H1 (cell line): ENCODE measurements at regions of chr11 and their contacts with region 1.

Region 1: GRCh38 chr11:100816823-100817222 is 129.7 kb downstream of the ARHGAP42 start:
- DNase-seq: no peak
- H3K4me3 ChIP-seq: no peak overlapping the region
- H3K27ac ChIP-seq: no peak overlapping the region
- H3K4me1 ChIP-seq: peaks cover 0 to 9% (median 2%) of the 10 kb centered on the region in 4 experiments; a peak in 4 of 7 replicates
- H3K27me3 ChIP-seq: peaks cover 0 to 1% (median 0%) of the 10 kb centered on the region in 4 experiments; a peak in 1 of 7 replicates
- CTCF ChIP-seq: no peak
- EP300 ChIP-seq: no peak
- POLR2A ChIP-seq: no peak
- RAD21 ChIP-seq: no peak

Region 2: GRCh38 chr11:100774132-100774531 is 42.7 kb before region 1 on chr11:
- CTCF ChIA-PET with region 1: interaction called, 10 read pairs
- POLR2A ChIA-PET with region 1: interaction called, 3 read pairs
- DNase-seq: no peak
- H3K4me3 ChIP-seq: no peak overlapping the region
- H3K27ac ChIP-seq: no peak overlapping the region
- H3K4me1 ChIP-seq: peaks cover 0 to 5% (median 3%) of the 10 kb centered on the region in 4 experiments; a peak in 2 of 7 replicates
- H3K27me3 ChIP-seq: no peaks in the 10 kb centered on the region
- CTCF ChIP-seq: no peak
- EP300 ChIP-seq: no peak
- POLR2A ChIP-seq: no peak
- RAD21 ChIP-seq: no peak

Region 3: GRCh38 chr11:100827934-100828661 is 11.3 kb after region 1 on chr11:
- CTCF ChIA-PET with region 1: interaction called, 16 read pairs
- POLR2A ChIA-PET with region 1: no interaction called
- DNase-seq: no peak
- H3K4me3 ChIP-seq: no peak overlapping the region
- H3K27ac ChIP-seq: peak overlapping the region; percentile 11; the same call in 1 of the 2 replicates
- H3K4me1 ChIP-seq: peaks cover 4 to 30% (median 18%) of the 10 kb centered on the region in 4 experiments; a peak in 6 of 7 replicates
- H3K27me3 ChIP-seq: peaks cover 0 to 1% (median 0%) of the 10 kb centered on the region in 4 experiments; a peak in 1 of 7 replicates
- CTCF ChIP-seq: peak in 1 of 3 experiments; percentile 26; a peak in 1 of 4 replicates
- EP300 ChIP-seq: no peak
- POLR2A ChIP-seq: no peak
- RAD21 ChIP-seq: peak; percentile 6 to 37; a peak in 1 of 4 replicates